CD8-positive, alpha-beta T cell (primary cell): ENCODE measurements at regions of chr12 and their contacts with region 1.

Region 1: DNA sequence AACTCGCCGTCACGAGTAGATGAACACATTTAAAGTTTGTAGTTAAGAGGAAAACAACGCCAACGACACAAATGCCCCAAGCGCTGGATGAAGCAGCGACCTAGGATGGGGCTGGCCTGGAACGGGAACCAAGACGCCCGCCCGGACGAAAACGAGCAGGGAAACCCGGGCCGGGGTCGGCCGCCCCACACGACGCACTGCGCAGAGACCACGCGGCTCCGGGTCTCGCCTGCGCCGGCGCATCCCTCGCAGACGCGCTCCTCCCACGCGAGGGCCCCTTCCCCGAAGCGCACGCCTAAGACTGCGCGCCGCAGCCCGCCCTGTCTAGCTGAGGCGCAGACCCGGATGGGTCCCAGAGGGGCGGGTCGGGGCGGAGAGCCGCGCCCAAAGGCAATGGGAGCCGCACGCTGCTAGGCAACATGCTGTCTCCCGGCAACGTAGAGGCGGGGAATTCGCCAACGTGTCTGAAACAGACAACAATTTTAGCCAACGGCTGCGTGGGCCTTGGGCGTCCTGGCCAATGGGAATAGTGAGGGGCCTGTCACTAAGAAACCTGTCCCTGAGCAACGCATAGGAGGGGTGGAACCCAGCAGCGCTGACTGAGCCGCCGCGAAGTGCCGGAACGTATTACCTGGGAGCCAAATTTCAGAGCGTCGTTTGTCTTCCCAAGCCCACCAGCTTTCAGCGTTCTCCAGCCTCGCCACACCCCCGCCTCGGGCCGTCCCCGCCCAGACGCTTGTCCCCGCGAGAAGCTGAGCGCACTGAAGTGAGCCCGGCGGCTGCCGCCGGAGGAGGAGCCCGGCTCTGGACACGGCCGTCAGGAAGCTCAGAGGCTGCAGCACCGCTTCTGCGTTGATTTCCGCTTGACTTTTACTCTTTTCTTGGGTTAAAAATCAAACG is 21.0 kb upstream of the CHFR start:
- DNase-seq: peak; percentile 88 to 98 (median 96)
- ATAC-seq: peak; percentile 92
- H3K4me3 ChIP-seq: peak overlapping the region; percentile 58 to 77
- H3K4me3 Mint-ChIP-seq: peak overlapping the region; percentile 96
- H3K27ac ChIP-seq: peak overlapping the region; percentile 86 to 93
- H3K27ac Mint-ChIP-seq: peak overlapping the region; percentile 97
- H3K4me1 ChIP-seq: peaks cover 6% of the 10 kb centered on the region
- H3K4me1 Mint-ChIP-seq: peaks cover 23% of the 10 kb centered on the region
- H3K27me3 ChIP-seq: peaks cover 0 to 2% of the 10 kb centered on the region in 2 experiments
- H3K27me3 Mint-ChIP-seq: no peaks in the 10 kb centered on the region
- CTCF ChIP-seq: no peak

Region 2: GRCh38 chr12:132687208-132688164 is 220.9 kb before region 1 on chr12 and contains the starts of genes POLE and PXMP2:
- CTCF ChIA-PET with region 1: no interaction called
- POLR2A ChIA-PET with region 1: no interaction called
- intact Hi-C with region 1: loop called in 1 of 2 experiments (anchors 2 kb)
- DNase-seq: peak; percentile 88 to 98 (median 94)
- ATAC-seq: peak; percentile 95
- H3K4me3 ChIP-seq: peak within 1 kb of the TSS; percentile 38 to 58
- H3K4me3 Mint-ChIP-seq: peak within 1 kb of the TSS; percentile 82
- H3K27ac ChIP-seq: peak within 1 kb of the TSS in 1 of 2 experiments; percentile 27
- H3K27ac Mint-ChIP-seq: peak within 1 kb of the TSS; percentile 55
- H3K4me1 ChIP-seq: peaks cover 7% of the 10 kb centered on the region
- H3K4me1 Mint-ChIP-seq: peaks cover 14% of the 10 kb centered on the region
- H3K27me3 ChIP-seq: no peaks in the 10 kb centered on the region
- H3K27me3 Mint-ChIP-seq: no peaks in the 10 kb centered on the region
- CTCF ChIP-seq: no peak
- total RNA-seq, gene POLE: 25.9 to 31.1 TPM
- total RNA-seq, gene PXMP2: 1.2 to 1.8 TPM

Region 3: GRCh38 chr12:132771126-132771838 is 137.1 kb before region 1 on chr12:
- CTCF ChIA-PET with region 1: interaction called, 10 read pairs
- POLR2A ChIA-PET with region 1: interaction called, 4 read pairs
- intact Hi-C with region 1: loop called (anchors 1 kb)
- DNase-seq: peak; percentile 13 to 79 (median 51)
- ATAC-seq: peak; percentile 84
- H3K4me3 ChIP-seq: peak overlapping the region in 1 of 2 experiments; percentile 37
- H3K4me3 Mint-ChIP-seq: peak overlapping the region; percentile 49
- H3K27ac ChIP-seq: peak overlapping the region; percentile 34 to 46
- H3K27ac Mint-ChIP-seq: peak overlapping the region; percentile 83
- H3K4me1 ChIP-seq: peaks cover 69% of the 10 kb centered on the region
- H3K4me1 Mint-ChIP-seq: peaks cover 62% of the 10 kb centered on the region
- H3K27me3 ChIP-seq: no peaks in the 10 kb centered on the region
- H3K27me3 Mint-ChIP-seq: no peaks in the 10 kb centered on the region
- CTCF ChIP-seq: no peak

Region 4: GRCh38 chr12:132837693-132838409 is 70.5 kb before region 1 on chr12:
- CTCF ChIA-PET with region 1: interaction called, 10 read pairs
- POLR2A ChIA-PET with region 1: interaction called, 4 read pairs
- intact Hi-C with region 1: no loop called
- DNase-seq: no peak
- ATAC-seq: no peak
- H3K4me3 ChIP-seq: peak overlapping the region in 1 of 2 experiments; percentile 1
- H3K4me3 Mint-ChIP-seq: peak overlapping the region; percentile 82
- H3K27ac ChIP-seq: no peak overlapping the region
- H3K27ac Mint-ChIP-seq: peak overlapping the region; percentile 93
- H3K4me1 ChIP-seq: peaks cover 42% of the 10 kb centered on the region
- H3K4me1 Mint-ChIP-seq: peaks cover 45% of the 10 kb centered on the region
- H3K27me3 ChIP-seq: no peaks in the 10 kb centered on the region
- H3K27me3 Mint-ChIP-seq: no peaks in the 10 kb centered on the region
- CTCF ChIP-seq: no peak

Region 5: DNA sequence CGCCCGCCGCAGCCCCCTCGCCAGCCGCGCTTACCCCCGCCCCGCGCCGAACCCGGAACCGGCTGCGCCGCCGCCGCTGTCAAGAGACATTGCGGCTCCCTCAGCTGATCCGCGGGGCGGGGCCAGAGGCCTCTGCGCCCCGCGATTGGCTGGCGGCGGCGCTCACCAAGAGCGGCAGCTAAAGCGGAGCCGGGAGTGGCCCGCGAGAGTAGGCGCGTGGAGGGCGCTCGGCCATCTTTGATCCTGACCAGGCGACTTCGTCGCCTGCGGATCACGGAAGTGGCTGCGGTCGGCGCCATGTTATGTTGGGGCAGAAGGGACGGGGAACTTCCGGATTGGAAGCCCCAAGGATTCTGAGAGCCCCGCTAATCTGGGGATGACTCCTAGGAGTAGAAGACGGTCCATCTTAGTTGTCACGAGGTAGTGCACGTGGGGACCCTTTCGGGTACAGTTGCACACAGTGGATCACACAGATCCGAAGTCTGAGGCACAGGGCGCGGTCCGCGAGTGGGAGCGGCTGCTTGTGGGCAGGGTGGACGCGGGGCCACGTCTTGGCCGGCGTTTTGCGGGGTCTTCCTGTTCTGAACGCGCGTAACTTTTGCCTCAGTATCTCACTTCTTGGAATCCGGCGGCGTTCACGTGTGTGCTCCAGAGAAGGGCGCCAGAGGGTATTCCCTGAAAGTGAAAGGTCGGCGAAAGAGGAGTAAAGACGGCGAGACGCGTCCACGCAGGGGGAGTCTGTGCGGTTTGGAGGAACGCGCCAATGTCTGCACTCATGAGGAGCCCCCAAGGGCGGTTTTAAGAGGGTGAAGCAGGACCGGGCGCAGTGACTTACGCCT is 20.7 kb before region 1 on chr12 and contains the start of gene CHFR:
- CTCF ChIA-PET with region 1: interaction called, 5 read pairs
- POLR2A ChIA-PET with region 1: interaction called, 7 read pairs
- intact Hi-C with region 1: loop called (anchors 1 kb)
- DNase-seq: peak; percentile 86 to 98 (median 93)
- ATAC-seq: peak; percentile 98
- H3K4me3 ChIP-seq: peak within 1 kb of the TSS; percentile 79 to 86
- H3K4me3 Mint-ChIP-seq: peak within 1 kb of the TSS; percentile 97
- H3K27ac ChIP-seq: peak within 1 kb of the TSS; percentile 92 to 99
- H3K27ac Mint-ChIP-seq: peak within 1 kb of the TSS; percentile 100
- H3K4me1 ChIP-seq: peaks cover 23% of the 10 kb centered on the region
- H3K4me1 Mint-ChIP-seq: peaks cover 34% of the 10 kb centered on the region
- H3K27me3 ChIP-seq: no peaks in the 10 kb centered on the region
- H3K27me3 Mint-ChIP-seq: no peaks in the 10 kb centered on the region
- CTCF ChIP-seq: no peak
- total RNA-seq, gene CHFR: 70.6 to 81.1 TPM

Region 6: DNA sequence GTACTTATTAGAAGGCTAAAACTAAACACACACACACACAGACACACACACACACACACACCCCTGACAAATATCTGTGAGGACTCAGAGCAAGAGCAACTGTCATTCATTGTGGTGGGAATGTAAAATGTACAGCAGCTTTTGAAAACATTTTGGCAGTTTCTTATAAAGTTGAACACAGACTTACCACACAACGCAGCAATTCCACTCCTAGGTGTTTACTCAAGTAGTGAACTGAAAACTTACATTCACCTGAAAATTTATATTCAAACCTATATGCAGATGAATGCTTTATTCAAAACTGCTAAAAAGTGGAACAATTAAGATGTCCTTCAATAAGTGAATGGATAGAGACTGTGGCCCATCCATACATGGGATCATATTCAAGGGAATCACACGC is 29.1 kb after region 1 on chr12:
- CTCF ChIA-PET with region 1: no interaction called
- POLR2A ChIA-PET with region 1: no interaction called
- intact Hi-C with region 1: no loop called
- DNase-seq: no peak
- ATAC-seq: no peak
- H3K4me3 ChIP-seq: no peak overlapping the region
- H3K4me3 Mint-ChIP-seq: no peak overlapping the region
- H3K27ac ChIP-seq: no peak overlapping the region
- H3K27ac Mint-ChIP-seq: no peak overlapping the region
- H3K4me1 ChIP-seq: no peaks in the 10 kb centered on the region
- H3K4me1 Mint-ChIP-seq: no peaks in the 10 kb centered on the region
- H3K27me3 ChIP-seq: no peaks in the 10 kb centered on the region
- H3K27me3 Mint-ChIP-seq: no peaks in the 10 kb centered on the region
- CTCF ChIP-seq: no peak

Region 7: DNA sequence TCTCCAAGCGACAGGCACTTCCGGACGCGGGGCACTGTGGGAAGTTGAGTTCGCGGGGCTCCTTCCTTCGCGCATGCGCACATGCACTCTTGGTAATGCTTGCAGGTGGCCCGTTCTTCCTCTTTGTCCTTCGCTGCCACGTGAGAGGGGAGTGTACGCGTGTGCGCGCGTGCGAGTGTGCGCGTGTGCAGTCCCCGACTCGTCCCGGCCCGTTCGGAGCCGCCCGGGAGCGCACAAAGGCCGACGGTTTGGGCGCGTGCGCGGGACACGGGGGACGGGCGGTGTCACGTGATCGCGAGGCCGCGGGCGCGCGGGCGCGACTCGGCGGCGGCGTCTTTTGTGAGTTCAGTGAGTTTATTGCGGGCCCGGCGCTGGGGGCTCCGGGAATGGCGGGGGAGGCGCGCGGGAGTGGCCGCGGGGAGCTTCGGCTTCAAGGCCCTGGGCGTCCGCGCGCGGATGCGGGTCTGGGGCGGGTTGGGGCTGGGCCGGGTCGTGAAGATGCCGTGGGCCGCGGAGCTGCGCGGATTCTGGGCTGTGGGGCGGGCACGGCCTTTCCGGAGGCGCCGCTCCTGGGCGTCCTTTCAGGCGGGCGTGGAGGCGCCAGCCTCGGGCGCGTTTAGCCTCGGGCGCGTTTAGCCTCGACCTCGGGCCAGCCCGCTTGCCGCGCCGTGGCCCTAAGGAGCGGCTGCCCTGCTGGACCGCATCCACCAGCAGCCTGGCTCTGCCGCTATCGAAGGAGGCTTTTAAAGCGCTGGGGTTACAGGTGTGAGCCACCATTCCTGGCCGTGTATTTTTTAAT is 129.0 kb after region 1 on chr12 and contains the start of gene ZNF84:
- CTCF ChIA-PET with region 1: no interaction called
- POLR2A ChIA-PET with region 1: no interaction called
- intact Hi-C with region 1: loop called (anchors 2 to 5 kb)
- DNase-seq: peak; percentile 94 to 99 (median 96)
- ATAC-seq: peak; percentile 97
- H3K4me3 ChIP-seq: peak within 1 kb of the TSS; percentile 62 to 69
- H3K4me3 Mint-ChIP-seq: peak within 1 kb of the TSS; percentile 93
- H3K27ac ChIP-seq: peak within 1 kb of the TSS; percentile 78 to 89
- H3K27ac Mint-ChIP-seq: peak within 1 kb of the TSS; percentile 92
- H3K4me1 ChIP-seq: peaks cover 4% of the 10 kb centered on the region
- H3K4me1 Mint-ChIP-seq: peaks cover 20% of the 10 kb centered on the region
- H3K27me3 ChIP-seq: no peaks in the 10 kb centered on the region
- H3K27me3 Mint-ChIP-seq: no peaks in the 10 kb centered on the region
- CTCF ChIP-seq: no peak
- total RNA-seq, gene ZNF84: 26.8 to 27.2 TPM